OCI-LY7 (cell line): ENCODE measurements at regions of chrX and their contacts with region 1.

Region 1: DNA sequence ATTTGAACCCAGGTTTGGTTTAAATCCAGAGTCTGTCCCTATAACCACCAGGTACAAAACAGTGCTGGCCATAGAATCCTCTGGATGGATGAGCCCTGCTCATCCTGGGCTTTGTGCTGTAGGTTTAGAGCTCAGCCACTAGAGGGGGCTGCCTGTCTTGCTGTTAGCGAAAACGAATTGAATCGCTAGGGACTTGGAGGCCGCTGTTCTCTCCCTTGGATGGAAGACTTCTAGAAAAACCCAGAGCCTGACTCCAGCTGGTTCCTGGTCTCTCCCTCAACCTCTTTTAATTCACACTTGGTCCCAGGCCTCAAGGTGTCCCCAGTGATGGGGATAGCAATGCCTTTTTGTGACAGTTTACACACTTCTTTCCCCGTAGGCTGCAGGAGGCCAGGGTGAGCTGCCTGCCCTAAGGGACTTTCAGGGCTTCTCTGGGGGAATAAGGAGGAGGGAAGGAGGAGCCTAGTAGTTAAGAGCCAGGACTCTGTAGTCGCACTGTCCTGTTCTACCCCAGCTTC is 8.7 kb downstream of the RIPPLY1 start:
- DNase-seq: peak; percentile 43
- H3K4me3 ChIP-seq: no peak overlapping the region
- H3K27ac ChIP-seq: no peak overlapping the region
- H3K4me1 ChIP-seq: no peaks in the 10 kb centered on the region
- CTCF ChIP-seq: peak; percentile 77

Region 2: DNA sequence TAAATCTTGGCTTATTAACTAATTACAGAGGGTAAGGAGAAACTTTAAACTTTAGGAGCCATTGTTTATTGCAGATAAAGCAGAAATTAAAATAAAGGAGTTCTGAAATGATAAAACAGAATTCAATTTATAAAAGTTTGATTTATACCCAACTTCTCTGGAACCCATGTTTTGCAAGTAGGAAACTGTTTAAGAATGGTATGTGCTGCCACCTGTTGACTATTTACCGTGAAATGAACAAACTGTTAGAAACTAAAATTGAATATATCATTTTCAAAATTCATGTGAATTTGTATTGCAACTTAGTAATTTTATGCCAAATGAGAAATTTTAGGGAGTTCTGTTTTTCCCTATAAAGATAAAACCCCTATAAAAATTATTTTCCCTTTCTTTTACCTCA is 103.0 kb before region 1 on chrX:
- CTCF ChIA-PET with region 1: no interaction called
- POLR2A ChIA-PET with region 1: no interaction called
- intact Hi-C with region 1: no loop called
- DNase-seq: peak; percentile 9
- H3K4me3 ChIP-seq: no peak overlapping the region
- H3K27ac ChIP-seq: no peak overlapping the region
- H3K4me1 ChIP-seq: no peaks in the 10 kb centered on the region
- CTCF ChIP-seq: peak; percentile 72

Region 3: GRCh38 chrX:107429090-107429489 is 534.6 kb after region 1 on chrX:
- CTCF ChIA-PET with region 1: no interaction called
- POLR2A ChIA-PET with region 1: no interaction called
- intact Hi-C with region 1: loop called (anchors 5 kb)
- DNase-seq: peak; percentile 53
- H3K4me3 ChIP-seq: no peak overlapping the region
- H3K27ac ChIP-seq: no peak overlapping the region
- H3K4me1 ChIP-seq: no peaks in the 10 kb centered on the region
- CTCF ChIP-seq: peak; percentile 64

Region 4: DNA sequence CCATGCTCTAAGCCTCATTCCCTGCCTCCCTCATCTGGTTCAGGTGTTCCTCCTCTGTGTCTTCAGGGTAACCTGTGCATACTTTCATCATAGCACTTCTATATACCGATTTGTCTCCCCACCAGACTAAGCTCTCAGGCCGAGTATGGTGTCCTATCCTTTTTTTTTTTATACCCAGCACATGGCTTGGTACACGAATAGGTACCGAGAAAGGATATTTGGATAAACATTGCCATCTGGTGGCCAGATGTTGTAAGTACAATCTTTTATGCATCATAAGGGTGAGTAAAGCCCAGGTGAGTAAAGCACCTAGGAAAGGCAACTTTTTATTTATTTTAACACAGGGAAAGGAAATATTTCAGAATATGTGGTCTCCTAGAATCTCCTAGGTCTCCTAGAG is 999.6 kb after region 1 on chrX:
- CTCF ChIA-PET with region 1: no interaction called
- POLR2A ChIA-PET with region 1: no interaction called
- intact Hi-C with region 1: loop called (anchors 10 kb)
- DNase-seq: peak; percentile 65
- H3K4me3 ChIP-seq: no peak overlapping the region
- H3K27ac ChIP-seq: no peak overlapping the region
- H3K4me1 ChIP-seq: no peaks in the 10 kb centered on the region
- CTCF ChIP-seq: peak; percentile 77